AG04450 (cell line): ENCODE measurements at regions of chr13 and their contacts with region 1.

Region 1: GRCh38 chr13:27362064-27362883 is 62.1 kb upstream of the GTF3A start:
- DNase-seq: peak; percentile 46
- H3K4me3 ChIP-seq: peak overlapping the region; percentile 66
- H3K27ac ChIP-seq: no peak overlapping the region
- H3K27me3 ChIP-seq: peaks cover 6% of the 10 kb centered on the region
- CTCF ChIP-seq: peak; percentile 97

Region 2: DNA sequence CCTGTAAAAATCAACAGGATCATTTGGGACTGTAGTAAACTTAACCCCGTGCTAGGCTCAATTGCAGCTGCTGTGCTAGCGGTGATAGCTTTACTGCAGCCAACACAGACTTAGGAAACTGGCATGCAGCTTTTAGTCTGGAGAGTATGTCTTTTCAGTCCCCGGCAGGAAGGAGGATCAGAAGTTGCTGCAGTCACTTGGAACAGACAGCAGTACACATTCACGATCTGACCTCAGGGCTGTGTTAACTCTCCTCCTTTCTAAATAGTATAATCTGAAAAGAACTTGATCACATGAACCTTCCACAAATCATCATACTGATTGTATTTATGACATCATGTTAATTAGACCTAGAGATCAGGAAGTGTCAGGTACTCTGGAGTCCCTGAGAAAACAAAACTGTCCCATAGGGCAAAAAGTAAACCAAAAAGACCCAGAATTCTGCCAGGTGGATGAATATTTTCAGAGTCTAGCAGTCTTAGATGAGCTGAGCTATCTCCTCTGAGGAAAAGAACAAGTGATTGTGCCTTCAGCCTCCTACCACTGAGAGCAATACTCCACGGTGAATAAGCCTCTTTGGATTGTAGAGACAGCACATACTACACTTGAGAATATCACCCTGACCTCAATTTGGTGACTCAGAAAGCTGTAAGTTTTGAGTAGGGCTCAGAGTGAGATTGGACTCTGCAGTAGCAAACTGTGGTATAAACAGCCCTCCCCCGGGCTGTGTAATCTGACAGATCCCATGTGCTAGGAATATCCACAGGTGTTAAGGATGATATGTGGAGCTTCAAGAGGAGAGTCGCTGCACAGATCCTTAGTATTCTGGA is 420.7 kb before region 1 on chr13:
- CTCF ChIA-PET with region 1: interaction called, 216 read pairs
- POLR2A ChIA-PET with region 1: no interaction called
- DNase-seq: peak; percentile 49
- H3K4me3 ChIP-seq: no peak overlapping the region
- H3K27ac ChIP-seq: no peak overlapping the region
- H3K27me3 ChIP-seq: peaks cover 7% of the 10 kb centered on the region
- CTCF ChIP-seq: no peak

Region 3: DNA sequence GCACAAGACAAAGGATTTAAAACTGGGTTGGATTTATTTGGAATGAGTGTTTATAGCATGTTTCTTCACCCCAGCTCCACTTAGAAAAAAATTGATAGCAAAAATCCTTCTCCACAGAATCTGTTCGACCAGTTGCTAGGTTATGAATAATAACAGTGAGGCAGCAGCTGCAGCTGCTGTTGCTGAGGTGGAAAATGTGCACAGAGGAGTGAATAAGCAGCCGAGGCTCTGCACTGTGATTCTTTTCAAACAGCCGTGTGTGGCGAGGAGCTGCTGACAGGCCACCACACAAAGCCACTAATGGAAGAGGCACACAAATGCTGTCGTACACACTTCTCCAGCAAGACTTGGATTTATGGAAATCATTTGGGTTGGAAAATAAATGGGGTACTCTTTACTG is 98.1 kb before region 1 on chr13:
- CTCF ChIA-PET with region 1: interaction called, 10 read pairs
- POLR2A ChIA-PET with region 1: no interaction called
- DNase-seq: peak; percentile 63
- H3K4me3 ChIP-seq: no peak overlapping the region
- H3K27ac ChIP-seq: peak overlapping the region; percentile 65
- H3K27me3 ChIP-seq: no peaks in the 10 kb centered on the region
- CTCF ChIP-seq: no peak

Region 4: GRCh38 chr13:27374650-27375049 is 12.4 kb after region 1 on chr13:
- CTCF ChIA-PET with region 1: interaction called, 62 read pairs
- POLR2A ChIA-PET with region 1: no interaction called
- DNase-seq: peak; percentile 59
- H3K4me3 ChIP-seq: no peak overlapping the region
- H3K27ac ChIP-seq: no peak overlapping the region
- H3K27me3 ChIP-seq: peaks cover 12% of the 10 kb centered on the region
- CTCF ChIP-seq: peak; percentile 85

Region 5: DNA sequence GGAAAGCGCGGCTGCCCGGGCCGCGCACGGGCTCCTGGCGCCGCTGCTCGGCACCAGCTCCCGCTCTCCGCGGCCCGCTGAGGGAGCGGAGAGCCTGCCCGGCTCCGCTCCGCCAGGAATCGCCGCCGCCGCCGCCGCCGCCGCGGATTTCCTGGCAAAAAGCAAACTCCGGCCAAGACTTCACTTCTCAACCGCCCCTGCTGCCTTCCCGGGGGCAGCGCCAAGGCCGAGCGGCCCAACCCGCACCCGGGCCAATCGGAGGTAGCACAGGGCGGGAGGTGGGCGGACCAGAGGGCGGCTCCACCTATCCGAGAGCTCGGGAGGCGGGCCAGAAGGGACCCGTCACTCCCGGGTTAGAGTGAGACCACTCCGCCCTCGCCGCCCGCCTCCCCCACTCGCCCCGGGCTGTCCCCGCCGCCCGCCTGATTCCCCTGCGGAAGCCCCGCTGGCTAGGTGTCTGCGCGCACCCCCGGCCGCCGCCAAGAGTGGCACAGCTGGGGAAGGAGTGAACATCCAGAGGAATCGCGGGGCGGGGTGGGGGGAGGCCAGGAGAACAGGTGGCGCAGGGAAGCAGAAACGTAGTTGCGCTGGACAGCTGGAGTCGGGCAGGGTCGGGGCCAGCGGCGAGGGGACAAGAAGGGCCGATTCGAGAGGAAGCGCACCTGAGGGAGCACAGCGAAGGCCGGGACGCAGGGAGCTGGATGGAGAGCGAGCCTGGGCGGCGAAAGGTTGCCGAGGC is 258.3 kb after region 1 on chr13 and contains the start of gene LNX2:
- CTCF ChIA-PET with region 1: interaction called, 10 read pairs
- POLR2A ChIA-PET with region 1: no interaction called
- DNase-seq: peak; percentile 90
- H3K4me3 ChIP-seq: peak within 1 kb of the TSS; percentile 88
- H3K27ac ChIP-seq: peak within 1 kb of the TSS; percentile 80
- H3K27me3 ChIP-seq: no peaks in the 10 kb centered on the region
- CTCF ChIP-seq: no peak
- polyA plus RNA-seq, gene LNX2: 6.2 and 6.9 TPM in 2 replicates

Region 6: DNA sequence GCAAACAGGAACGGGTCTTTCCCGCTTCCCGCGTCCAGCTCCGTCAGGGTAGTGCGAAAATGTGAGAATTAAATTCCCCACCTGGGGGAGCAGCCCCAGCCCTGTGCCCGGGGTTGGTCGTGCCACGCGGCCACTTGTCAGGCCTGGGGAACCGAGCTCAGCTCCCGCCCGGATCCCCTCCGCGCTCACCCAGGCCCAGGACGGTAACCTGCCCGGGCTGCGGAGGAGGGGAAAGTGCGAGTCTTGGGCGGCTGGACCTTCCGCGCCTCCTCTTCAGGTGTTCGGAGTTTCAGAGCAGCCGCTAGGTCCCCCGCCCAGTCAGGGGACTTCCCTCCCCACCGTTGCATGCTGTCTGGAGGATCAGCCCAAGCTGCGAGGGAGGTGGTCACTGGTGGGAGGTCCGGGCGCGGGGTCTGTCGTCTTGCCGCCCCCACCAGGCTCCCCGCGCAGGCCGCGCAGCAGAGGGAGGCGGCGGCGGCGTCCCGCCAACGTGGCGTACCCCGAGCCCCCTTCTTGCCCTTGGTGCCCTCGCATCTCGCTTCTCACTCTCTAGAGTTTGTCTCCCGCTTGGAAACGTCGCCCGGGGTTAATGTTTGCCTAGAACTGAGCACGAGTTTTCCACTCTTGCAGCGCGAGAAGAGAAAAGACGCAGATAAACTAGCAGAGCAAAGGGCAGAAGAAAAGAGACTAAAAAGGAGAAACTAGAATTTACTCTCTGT is 618.2 kb after region 1 on chr13:
- CTCF ChIA-PET with region 1: interaction called, 155 read pairs
- POLR2A ChIA-PET with region 1: no interaction called
- DNase-seq: no peak
- H3K4me3 ChIP-seq: no peak overlapping the region
- H3K27ac ChIP-seq: no peak overlapping the region
- H3K27me3 ChIP-seq: peaks cover 69% of the 10 kb centered on the region
- CTCF ChIP-seq: no peak